K562 (cell line): ENCODE measurements at regions of chr12 and their contacts with region 1.

Region 1: GRCh38 chr12:57765042-57765697 is 1.7 kb downstream of the CYP27B1 start:
- DNase-seq: no peak
- ATAC-seq: no peak
- H3K4me3 ChIP-seq: no peak overlapping the region
- H3K27ac ChIP-seq: no peak overlapping the region
- H3K4me1 ChIP-seq: peaks cover 8 to 25% of the 10 kb centered on the region in 2 experiments
- H3K27me3 ChIP-seq: no peaks in the 10 kb centered on the region
- CTCF ChIP-seq: 0 out of 6 replicates have a peak, but pooled peaks of 1 of the 3 experiments have one; percentile 11
- EP300 ChIP-seq: no peak
- POLR2A ChIP-seq: no peak
- RAD21 ChIP-seq: no peak

Region 2: DNA sequence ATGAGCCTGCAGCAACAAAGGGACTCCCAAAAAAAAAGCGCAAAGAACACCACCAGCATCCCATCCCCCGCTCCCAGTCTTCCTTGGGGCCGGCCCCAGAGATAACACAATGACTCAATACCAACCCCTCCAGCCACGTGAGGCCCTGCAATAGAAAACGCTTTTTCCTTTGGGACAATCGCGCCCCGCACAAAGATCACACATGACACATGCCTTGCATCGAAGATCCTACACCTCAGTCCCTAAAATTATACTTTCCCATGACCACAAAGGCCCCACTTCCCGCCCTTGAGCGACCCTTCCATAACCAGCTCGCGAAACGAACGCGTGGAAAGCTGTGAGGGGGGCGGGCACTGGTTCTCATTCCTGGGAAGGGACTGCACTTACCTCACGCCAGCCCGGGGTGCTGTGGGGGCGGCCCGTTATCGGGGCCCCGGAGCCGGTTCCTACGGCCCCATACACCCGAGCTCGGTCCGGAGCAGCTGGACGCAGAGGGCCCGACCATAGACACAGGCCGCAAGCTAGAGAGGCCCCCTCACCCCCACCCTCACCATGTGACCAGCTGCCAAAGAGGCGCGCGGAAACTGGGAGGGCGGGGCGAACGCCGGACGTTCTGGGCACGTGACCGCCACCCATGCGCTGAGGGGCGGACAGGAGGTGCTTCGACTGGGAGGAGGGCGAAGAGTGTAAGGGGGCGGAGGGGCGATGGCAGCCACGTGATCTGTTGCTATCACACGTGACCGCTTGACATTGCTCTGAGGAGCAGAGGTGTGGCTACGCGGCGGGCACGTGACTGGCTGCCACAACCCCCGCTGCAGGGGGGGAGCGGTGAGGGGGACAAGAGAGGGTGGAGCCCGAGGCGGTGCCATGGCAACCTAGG is 13.1 kb before region 1 on chr12 and contains the start of gene CDK4:
- CTCF ChIA-PET with region 1: no interaction called
- POLR2A ChIA-PET with region 1: interaction called, 26 read pairs
- in situ Hi-C with region 1: no loop called
- intact Hi-C with region 1: no loop called
- DNase-seq: peak; percentile 92 to 99 (median 96)
- ATAC-seq: peak; percentile 86
- H3K4me3 ChIP-seq: peak within 1 kb of the TSS; percentile 66
- H3K27ac ChIP-seq: peak within 1 kb of the TSS; percentile 96
- H3K4me1 ChIP-seq: peaks cover 34 to 40% of the 10 kb centered on the region in 2 experiments
- H3K27me3 ChIP-seq: no peaks in the 10 kb centered on the region
- CTCF ChIP-seq: no peak; a peak in 1 of 6 replicates
- EP300 ChIP-seq: peak; percentile 75
- POLR2A ChIP-seq: peak; percentile 90
- RAD21 ChIP-seq: 0 out of 4 replicates have a peak, but pooled peaks of 1 of the 2 experiments have one; percentile 1
- polyA plus RNA-seq, gene CDK4: 37.8 to 62.8 TPM